MCF 10A (cell line): ENCODE measurements at regions of chr15 and their contacts with region 1.

Region 1: GRCh38 chr15:46312133-46312740 is 677.4 kb downstream of the SQOR start:
- DNase-seq: peak; percentile 47
- H3K4me3 Mint-ChIP-seq: no peak overlapping the region
- H3K27ac Mint-ChIP-seq: no peak overlapping the region
- H3K4me1 Mint-ChIP-seq: no peaks in the 10 kb centered on the region
- H3K27me3 Mint-ChIP-seq: no peaks in the 10 kb centered on the region
- CTCF ChIP-seq: peak; percentile 82

Region 2: DNA sequence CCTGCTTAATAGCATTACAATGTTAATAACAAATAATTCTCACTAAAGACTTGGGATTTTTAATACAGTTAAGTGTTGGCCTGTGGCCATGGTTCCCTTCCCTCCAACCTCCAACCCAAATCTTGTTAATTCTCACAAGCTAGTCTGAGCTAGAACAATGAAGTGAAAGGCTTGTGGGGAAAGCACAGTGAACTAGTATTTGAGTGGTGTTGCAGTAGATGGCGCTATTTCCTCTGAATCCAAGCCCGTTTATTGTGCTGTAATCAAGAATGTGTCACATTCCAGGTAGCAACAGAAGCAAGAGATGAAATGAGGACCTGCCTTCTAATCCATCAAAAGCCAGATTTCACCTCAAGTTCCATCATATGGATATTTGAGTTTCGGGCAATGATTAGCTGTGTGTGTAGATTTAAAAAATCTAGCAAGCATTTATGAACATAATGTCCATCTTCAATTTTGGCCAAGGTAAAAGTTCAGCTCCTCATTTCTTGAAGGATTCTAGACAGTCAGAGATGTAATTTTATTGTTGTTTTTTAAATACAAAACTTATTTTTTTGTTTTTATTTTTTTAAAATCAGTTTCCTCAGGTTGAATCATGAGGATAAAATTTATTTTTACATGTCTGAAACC is 516.7 kb before region 1 on chr15:
- CTCF ChIA-PET with region 1: interaction called, 13 read pairs
- POLR2A ChIA-PET with region 1: interaction called, 3 read pairs
- intact Hi-C with region 1: loop called (anchors 2 kb)
- DNase-seq: peak; percentile 70
- H3K4me3 Mint-ChIP-seq: no peak overlapping the region
- H3K27ac Mint-ChIP-seq: no peak overlapping the region
- H3K4me1 Mint-ChIP-seq: peaks cover 5% of the 10 kb centered on the region
- H3K27me3 Mint-ChIP-seq: peaks cover 27% of the 10 kb centered on the region
- CTCF ChIP-seq: peak; percentile 67

Region 3: GRCh38 chr15:45884755-45885445 is 427.3 kb before region 1 on chr15:
- CTCF ChIA-PET with region 1: no interaction called
- POLR2A ChIA-PET with region 1: no interaction called
- intact Hi-C with region 1: no loop called
- DNase-seq: no peak
- H3K4me3 Mint-ChIP-seq: no peak overlapping the region
- H3K27ac Mint-ChIP-seq: no peak overlapping the region
- H3K4me1 Mint-ChIP-seq: no peaks in the 10 kb centered on the region
- H3K27me3 Mint-ChIP-seq: no peaks in the 10 kb centered on the region
- CTCF ChIP-seq: no peak

Region 4: GRCh38 chr15:46301291-46301690 is 10.9 kb before region 1 on chr15:
- CTCF ChIA-PET with region 1: interaction called, 15 read pairs
- POLR2A ChIA-PET with region 1: interaction called, 3 read pairs
- intact Hi-C with region 1: no loop called
- DNase-seq: no peak
- H3K4me3 Mint-ChIP-seq: no peak overlapping the region
- H3K27ac Mint-ChIP-seq: no peak overlapping the region
- H3K4me1 Mint-ChIP-seq: peaks cover 14% of the 10 kb centered on the region
- H3K27me3 Mint-ChIP-seq: no peaks in the 10 kb centered on the region
- CTCF ChIP-seq: no peak

Region 5: GRCh38 chr15:46654993-46655392 is 342.8 kb after region 1 on chr15:
- CTCF ChIA-PET with region 1: no interaction called
- POLR2A ChIA-PET with region 1: no interaction called
- intact Hi-C with region 1: loop called (anchors 10 kb)
- DNase-seq: no peak
- H3K4me3 Mint-ChIP-seq: no peak overlapping the region
- H3K27ac Mint-ChIP-seq: no peak overlapping the region
- H3K4me1 Mint-ChIP-seq: no peaks in the 10 kb centered on the region
- H3K27me3 Mint-ChIP-seq: peaks cover 53% of the 10 kb centered on the region
- CTCF ChIP-seq: no peak

Region 6: DNA sequence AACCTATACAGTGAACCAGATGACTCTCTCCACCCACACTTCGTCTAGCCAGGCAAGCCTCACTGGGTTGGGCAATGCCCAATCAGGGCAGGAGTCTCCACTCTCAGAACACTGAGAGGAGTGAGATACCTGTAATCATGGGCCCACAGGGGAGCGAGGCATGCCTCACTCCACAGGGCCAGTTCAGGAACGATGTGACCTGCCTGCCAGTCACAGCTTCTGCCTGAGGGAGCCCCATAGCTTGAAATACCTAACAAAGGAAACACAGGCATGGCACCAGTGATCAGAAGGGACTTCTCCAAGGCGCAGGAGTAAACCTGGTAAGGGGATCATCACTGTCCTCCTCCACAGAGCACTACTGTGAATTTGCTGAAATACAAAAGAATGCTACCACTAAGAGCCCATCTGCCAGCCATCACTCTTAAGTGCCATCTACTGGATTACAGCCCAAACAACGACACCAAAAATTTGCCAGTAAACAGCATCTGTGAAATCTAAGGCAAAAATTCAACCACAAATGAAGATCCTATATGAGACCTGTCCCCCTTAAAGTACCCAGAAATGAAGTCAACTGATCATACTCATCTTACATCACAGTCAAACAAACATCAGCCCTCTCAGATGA is 715.2 kb after region 1 on chr15:
- CTCF ChIA-PET with region 1: no interaction called
- POLR2A ChIA-PET with region 1: no interaction called
- intact Hi-C with region 1: loop called (anchors 1 kb)
- DNase-seq: no peak
- H3K4me3 Mint-ChIP-seq: no peak overlapping the region
- H3K27ac Mint-ChIP-seq: no peak overlapping the region
- H3K4me1 Mint-ChIP-seq: no peaks in the 10 kb centered on the region
- H3K27me3 Mint-ChIP-seq: no peaks in the 10 kb centered on the region
- CTCF ChIP-seq: peak; percentile 16